ENCODE measurements at regions of chr1 and their contacts with region 1.

Region 1: DNA sequence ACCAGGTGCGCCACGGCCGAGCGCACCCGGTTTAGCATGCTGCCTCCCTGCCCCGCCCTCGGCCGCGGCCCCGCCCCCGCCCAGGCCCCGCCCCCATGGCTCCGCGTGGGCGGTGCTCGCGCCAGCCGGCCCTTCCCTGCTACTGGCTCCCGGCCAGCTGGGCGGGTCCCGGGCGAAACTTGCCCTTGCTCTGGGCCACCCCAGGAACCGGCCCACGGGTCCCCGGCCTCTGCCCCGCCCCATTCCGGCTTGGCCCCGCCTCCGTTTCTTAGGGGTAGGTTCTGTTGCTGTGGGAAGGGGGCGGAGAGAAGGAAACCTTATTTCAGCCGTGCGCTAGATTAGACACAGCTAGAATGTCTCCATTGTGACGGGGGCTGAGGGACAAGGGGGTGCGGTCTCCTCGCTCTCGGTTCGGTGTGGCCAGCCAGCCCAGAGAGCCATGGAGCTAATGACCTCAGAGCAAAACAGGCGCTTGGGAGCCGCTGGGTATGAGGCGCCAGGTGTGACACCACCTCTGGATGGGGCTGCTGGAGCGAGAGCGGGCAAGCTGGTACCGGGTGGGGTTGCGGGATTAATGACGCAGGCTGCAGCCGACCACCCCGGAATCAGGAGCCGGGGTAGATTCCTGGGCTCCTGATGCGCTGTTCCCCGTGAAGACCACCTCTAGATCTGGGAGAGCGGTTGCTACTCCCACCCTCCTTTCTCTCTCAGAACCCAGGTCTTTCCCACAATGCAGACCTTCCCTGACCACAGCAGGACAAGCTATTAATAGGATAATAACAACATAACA is at the start of gene PPM1J:
- DNase-seq: peak; percentile 99 to 100 (median 100)
- ATAC-seq: peak; percentile 93
- H3K4me3 ChIP-seq: peak within 1 kb of the TSS; percentile 59
- H3K27ac ChIP-seq: no peak within 1 kb of the TSS
- H3K4me1 ChIP-seq: peaks cover 17 to 37% of the 10 kb centered on the region in 2 experiments; a peak in 4 of 5 replicates
- H3K27me3 ChIP-seq: peaks cover 5 to 16% of the 10 kb centered on the region in 2 experiments; a peak in 4 of 5 replicates
- CTCF ChIP-seq: 0 out of 6 replicates have a peak, but pooled peaks of 1 of the 3 experiments have one; percentile 2
- EP300 ChIP-seq: no peak
- POLR2A ChIP-seq: no peak
- RAD21 ChIP-seq: no peak
- polyA plus RNA-seq, gene PPM1J: 0.25 to 0.31 TPM

Region 2: DNA sequence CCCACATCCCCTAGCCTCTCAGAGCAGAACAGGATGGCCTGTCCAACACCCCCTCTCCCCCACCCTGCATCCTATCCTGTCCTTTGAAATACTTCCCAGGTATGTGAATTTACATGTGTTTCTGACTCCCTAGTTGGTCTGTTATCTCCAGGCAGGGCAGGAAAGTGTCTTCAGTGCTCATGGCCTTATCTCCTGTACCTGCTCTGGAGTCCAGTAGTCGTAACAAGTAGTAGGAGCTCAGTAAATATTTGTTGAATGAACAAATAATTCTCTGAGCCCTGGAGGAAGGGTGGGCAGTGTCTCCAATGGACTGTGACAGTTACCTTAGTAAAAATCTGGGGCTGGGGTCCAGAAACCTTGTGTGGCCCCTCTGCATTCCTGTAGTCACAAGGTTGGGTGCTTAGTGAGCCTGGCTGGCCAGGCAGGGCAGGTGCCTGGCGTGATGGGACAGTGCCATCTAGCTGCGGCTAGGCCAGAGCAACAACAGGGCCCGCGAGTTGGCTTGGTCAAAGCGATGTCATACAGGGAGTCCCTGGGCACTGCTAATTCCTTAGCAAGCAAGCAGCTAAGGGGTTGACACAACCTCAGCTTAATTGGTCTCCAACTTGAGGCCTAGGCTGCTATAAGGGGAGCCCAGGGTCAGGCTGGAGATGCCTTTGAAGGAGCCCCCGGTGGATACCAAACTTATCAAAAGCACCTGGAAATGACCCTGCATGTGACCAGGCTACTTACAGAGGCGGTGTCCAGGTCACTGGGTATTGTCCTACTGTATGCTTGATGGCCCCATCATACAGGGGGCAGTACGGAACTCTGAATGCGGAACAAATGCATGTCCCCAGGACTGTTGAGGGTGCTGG is 88.7 kb after region 1 on chr1:
- CTCF ChIA-PET with region 1: interaction called, 109 read pairs
- POLR2A ChIA-PET with region 1: interaction called, 6 read pairs
- in situ Hi-C with region 1: loop called (anchors 5 kb)
- intact Hi-C with region 1: loop called (anchors 1 kb)
- DNase-seq: peak; percentile 73 to 85 (median 76)
- ATAC-seq: peak; percentile 98
- H3K4me3 ChIP-seq: no peak overlapping the region
- H3K27ac ChIP-seq: no peak overlapping the region
- H3K4me1 ChIP-seq: peaks cover 0 to 3% of the 10 kb centered on the region in 2 experiments; a peak in 1 of 5 replicates
- H3K27me3 ChIP-seq: peaks cover 19 to 28% of the 10 kb centered on the region in 2 experiments; a peak in 4 of 5 replicates
- CTCF ChIP-seq: peak; percentile 96 to 98 (median 97)
- EP300 ChIP-seq: 0 out of 2 replicates have a peak, but pooled peaks have one; percentile 22
- POLR2A ChIP-seq: no peak
- RAD21 ChIP-seq: peak; percentile 99 to 100

Region 3: GRCh38 chr1:112870887-112871614 is 155.6 kb after region 1 on chr1:
- CTCF ChIA-PET with region 1: no interaction called
- POLR2A ChIA-PET with region 1: no interaction called
- in situ Hi-C with region 1: no loop called
- intact Hi-C with region 1: loop called (anchors 2 kb)
- DNase-seq: no peak
- ATAC-seq: no peak
- H3K4me3 ChIP-seq: no peak overlapping the region
- H3K27ac ChIP-seq: no peak overlapping the region
- H3K4me1 ChIP-seq: peaks cover 0 to 24% of the 10 kb centered on the region in 2 experiments; a peak in 3 of 5 replicates
- H3K27me3 ChIP-seq: no peaks in the 10 kb centered on the region
- CTCF ChIP-seq: no peak
- EP300 ChIP-seq: no peak
- POLR2A ChIP-seq: no peak
- RAD21 ChIP-seq: no peak

Region 4: GRCh38 chr1:112955781-112956543 is 240.5 kb after region 1 on chr1 and contains the start of gene SLC16A1:
- CTCF ChIA-PET with region 1: no interaction called
- POLR2A ChIA-PET with region 1: interaction called, 5 read pairs
- in situ Hi-C with region 1: no loop called
- intact Hi-C with region 1: loop called (anchors 5 kb)
- DNase-seq: peak; percentile 97 to 98 (median 98)
- ATAC-seq: peak; percentile 84
- H3K4me3 ChIP-seq: peak within 1 kb of the TSS; percentile 74
- H3K27ac ChIP-seq: peak within 1 kb of the TSS; percentile 96
- H3K4me1 ChIP-seq: peaks cover 20 to 31% of the 10 kb centered on the region in 2 experiments
- H3K27me3 ChIP-seq: no peaks in the 10 kb centered on the region
- CTCF ChIP-seq: peak; percentile 42 to 59 (median 55); a peak in 5 of 6 replicates
- EP300 ChIP-seq: peak; percentile 53
- POLR2A ChIP-seq: peak; percentile 99
- RAD21 ChIP-seq: peak; percentile 71 to 77
- polyA plus RNA-seq, gene SLC16A1: 79.0 to 82.5 TPM

Region 5: DNA sequence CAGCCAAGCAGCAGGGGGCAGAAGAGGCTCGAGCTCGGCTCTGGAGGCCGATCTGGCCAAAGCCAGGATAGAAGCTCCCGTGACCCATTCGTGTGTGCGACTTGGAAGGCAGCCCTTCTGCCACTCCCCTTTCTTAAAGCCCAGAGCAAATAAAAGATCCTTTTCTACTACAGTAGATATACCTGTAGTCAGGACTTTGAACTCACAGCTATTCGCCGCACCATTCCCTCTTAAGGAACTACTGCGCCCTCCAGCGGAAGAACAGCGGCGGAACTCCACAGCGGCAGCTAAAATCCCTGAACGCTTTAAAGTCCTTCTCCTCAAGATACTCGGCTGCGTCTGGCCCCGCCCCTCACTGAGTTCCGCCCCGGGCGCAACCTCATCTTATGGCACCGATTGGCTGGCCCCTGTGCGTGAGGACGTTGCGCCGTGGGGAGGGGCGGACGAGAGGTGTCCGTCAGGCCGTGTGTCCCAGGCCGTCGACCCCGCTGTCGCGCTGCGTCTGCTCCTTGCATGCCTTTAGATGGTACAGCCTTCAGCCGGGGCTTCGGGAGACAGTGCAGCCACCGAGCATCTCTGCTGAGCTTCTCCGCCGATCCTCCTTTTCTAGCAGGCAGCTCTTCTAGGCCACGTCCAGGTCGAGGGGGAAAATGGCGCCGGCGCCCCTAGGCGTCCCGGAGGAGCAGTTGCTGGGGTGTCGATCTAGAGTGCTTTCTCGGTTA is 357.5 kb after region 1 on chr1 and contains the start of gene LRIG2:
- CTCF ChIA-PET with region 1: interaction called, 20 read pairs
- POLR2A ChIA-PET with region 1: interaction called, 6 read pairs
- in situ Hi-C with region 1: no loop called
- intact Hi-C with region 1: loop called (anchors 2 kb)
- DNase-seq: peak; percentile 96 to 100 (median 97)
- ATAC-seq: peak; percentile 97
- H3K4me3 ChIP-seq: peak within 1 kb of the TSS; percentile 96
- H3K27ac ChIP-seq: peak within 1 kb of the TSS; percentile 96
- H3K4me1 ChIP-seq: peaks cover 16% of the 10 kb centered on the region in 2 experiments
- H3K27me3 ChIP-seq: no peaks in the 10 kb centered on the region
- CTCF ChIP-seq: peak; percentile 75 to 97 (median 95)
- EP300 ChIP-seq: no peak; the same call in 1 of the 2 replicates
- POLR2A ChIP-seq: peak; percentile 98
- RAD21 ChIP-seq: peak; percentile 81 to 87
- polyA plus RNA-seq, gene LRIG2: 1.8 to 3.3 TPM

Region 6: GRCh38 chr1:113677250-113678158 is 962.0 kb after region 1 on chr1:
- CTCF ChIA-PET with region 1: interaction called, 6 read pairs
- POLR2A ChIA-PET with region 1: no interaction called
- in situ Hi-C with region 1: no loop called
- intact Hi-C with region 1: loop called (anchors 5 kb)
- DNase-seq: peak; percentile 80 to 94 (median 83)
- ATAC-seq: peak; percentile 96
- H3K4me3 ChIP-seq: no peak overlapping the region
- H3K27ac ChIP-seq: no peak overlapping the region
- H3K4me1 ChIP-seq: peaks cover 0 to 32% of the 10 kb centered on the region in 2 experiments; a peak in 4 of 5 replicates
- H3K27me3 ChIP-seq: no peaks in the 10 kb centered on the region
- CTCF ChIP-seq: peak; percentile 59 to 85 (median 64)
- EP300 ChIP-seq: peak; percentile 76
- POLR2A ChIP-seq: no peak
- RAD21 ChIP-seq: peak; percentile 85 to 86

Measured in K562 (cell line).